A549 (cell line): ENCODE measurements at regions of chr19 and their contacts with region 1.

Region 1: GRCh38 chr19:53977429-53977990 is 13.9 kb upstream of the CACNG6 start:
- DNase-seq: peak; percentile 90 to 96
- ATAC-seq: peak; percentile 17 to 41
- H3K4me3 ChIP-seq: peak overlapping the region; percentile 39
- H3K27ac ChIP-seq: peak overlapping the region; percentile 70 to 97
- H3K4me1 ChIP-seq: peaks cover 10% of the 10 kb centered on the region; the same call in 2 of the 3 replicates
- CTCF ChIP-seq: no peak
- EP300 ChIP-seq: no peak
- POLR2A ChIP-seq: no peak
- RAD21 ChIP-seq: no peak

Region 2: DNA sequence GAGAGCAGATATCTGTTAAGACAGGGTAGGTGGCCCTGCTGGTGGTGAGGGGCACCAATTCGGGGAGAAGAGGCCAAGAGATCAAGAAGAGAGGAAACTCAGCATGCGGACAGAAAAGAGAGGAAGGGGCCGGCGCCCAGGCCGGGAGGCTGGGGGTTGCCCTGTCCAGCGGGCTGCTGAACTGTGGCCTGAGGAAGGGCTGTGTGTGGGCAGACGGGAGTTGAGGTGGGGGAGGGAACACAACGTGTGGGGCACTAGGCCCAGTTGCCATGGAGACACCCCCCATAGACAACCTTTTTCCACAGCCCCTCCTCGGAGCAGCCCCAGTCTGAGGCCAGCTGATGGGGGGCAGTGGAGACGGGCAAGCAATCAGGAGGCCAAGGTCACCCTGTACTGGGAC is 17.3 kb before region 1 on chr19:
- CTCF ChIA-PET with region 1: no interaction called
- POLR2A ChIA-PET with region 1: no interaction called
- DNase-seq: no peak
- ATAC-seq: no peak
- H3K4me3 ChIP-seq: no peak overlapping the region
- H3K27ac ChIP-seq: no peak overlapping the region
- H3K4me1 ChIP-seq: peaks cover 22% of the 10 kb centered on the region
- CTCF ChIP-seq: no peak
- EP300 ChIP-seq: no peak
- POLR2A ChIP-seq: no peak
- RAD21 ChIP-seq: no peak

Region 3: DNA sequence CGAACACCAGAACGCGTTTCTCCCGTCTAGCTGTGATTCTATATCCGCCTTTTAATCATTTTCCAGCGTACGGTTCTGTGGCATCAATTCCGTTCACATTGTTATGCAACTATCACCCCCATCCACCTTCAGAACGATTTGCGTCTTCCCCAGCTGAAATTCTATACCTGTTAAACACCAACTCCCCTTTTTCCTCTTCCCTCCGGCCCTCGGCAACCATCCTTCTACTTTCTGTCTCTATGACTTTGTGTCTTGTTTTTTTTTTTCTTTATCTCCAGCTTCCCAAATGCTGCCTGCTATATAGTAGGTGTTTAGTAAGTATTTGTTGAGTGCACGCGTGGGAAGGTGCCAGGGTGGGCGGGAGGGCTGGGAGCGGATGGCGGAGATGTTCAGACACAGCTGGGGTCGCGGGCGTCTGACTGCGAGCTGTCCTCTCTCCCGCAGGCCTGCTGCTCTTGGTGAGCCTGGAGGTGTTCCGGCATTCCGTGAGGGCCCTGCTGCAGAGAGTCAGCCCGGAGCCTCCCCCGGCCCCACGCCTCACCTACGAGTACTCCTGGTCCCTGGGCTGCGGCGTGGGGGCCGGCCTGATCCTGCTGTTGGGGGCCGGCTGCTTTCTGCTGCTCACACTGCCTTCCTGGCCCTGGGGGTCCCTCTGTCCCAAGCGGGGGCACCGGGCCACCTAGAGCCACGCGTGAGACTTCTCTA is 34.1 kb after region 1 on chr19:
- CTCF ChIA-PET with region 1: interaction called, 10 read pairs
- POLR2A ChIA-PET with region 1: interaction called, 14 read pairs
- DNase-seq: no peak
- ATAC-seq: no peak
- H3K4me3 ChIP-seq: no peak overlapping the region
- H3K27ac ChIP-seq: peak overlapping the region; percentile 38 to 92
- H3K4me1 ChIP-seq: peaks cover 46% of the 10 kb centered on the region
- CTCF ChIP-seq: no peak
- EP300 ChIP-seq: no peak
- POLR2A ChIP-seq: no peak
- RAD21 ChIP-seq: no peak

Region 4: GRCh38 chr19:54077334-54077733 is 99.8 kb after region 1 on chr19:
- CTCF ChIA-PET with region 1: no interaction called
- POLR2A ChIA-PET with region 1: no interaction called
- DNase-seq: no peak
- ATAC-seq: no peak
- H3K4me3 ChIP-seq: no peak overlapping the region
- H3K27ac ChIP-seq: no peak overlapping the region
- H3K4me1 ChIP-seq: no peaks in the 10 kb centered on the region
- CTCF ChIP-seq: no peak
- EP300 ChIP-seq: no peak
- POLR2A ChIP-seq: no peak
- RAD21 ChIP-seq: no peak

Region 5: DNA sequence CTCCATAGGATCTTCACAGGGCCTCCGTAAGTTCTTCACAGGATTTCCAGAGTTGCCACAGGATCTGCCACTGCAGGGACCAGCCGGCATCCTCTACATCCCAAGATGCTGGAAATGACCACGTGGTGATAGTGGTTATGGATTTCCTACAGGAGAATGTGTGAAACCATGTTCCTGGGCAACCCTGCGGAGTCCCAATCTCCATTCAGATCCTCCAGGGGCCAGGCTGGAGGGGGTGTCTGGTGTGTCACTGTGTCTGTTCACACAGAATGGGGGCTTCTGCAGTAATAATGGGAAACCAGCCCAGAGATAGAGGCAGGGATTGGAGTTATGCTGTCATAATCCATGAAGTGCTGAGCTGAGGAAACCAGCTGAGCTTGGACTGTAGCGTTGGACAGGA is 256.4 kb after region 1 on chr19:
- CTCF ChIA-PET with region 1: no interaction called
- POLR2A ChIA-PET with region 1: no interaction called
- DNase-seq: no peak
- ATAC-seq: no peak
- H3K4me3 ChIP-seq: no peak overlapping the region
- H3K27ac ChIP-seq: no peak overlapping the region
- H3K4me1 ChIP-seq: no peaks in the 10 kb centered on the region
- CTCF ChIP-seq: no peak
- EP300 ChIP-seq: no peak
- POLR2A ChIP-seq: no peak
- RAD21 ChIP-seq: no peak